Sigmoid colon (tissue), 7 donors: ENCODE measurements at regions of chr17 and their contacts with region 1.

Region 1: DNA sequence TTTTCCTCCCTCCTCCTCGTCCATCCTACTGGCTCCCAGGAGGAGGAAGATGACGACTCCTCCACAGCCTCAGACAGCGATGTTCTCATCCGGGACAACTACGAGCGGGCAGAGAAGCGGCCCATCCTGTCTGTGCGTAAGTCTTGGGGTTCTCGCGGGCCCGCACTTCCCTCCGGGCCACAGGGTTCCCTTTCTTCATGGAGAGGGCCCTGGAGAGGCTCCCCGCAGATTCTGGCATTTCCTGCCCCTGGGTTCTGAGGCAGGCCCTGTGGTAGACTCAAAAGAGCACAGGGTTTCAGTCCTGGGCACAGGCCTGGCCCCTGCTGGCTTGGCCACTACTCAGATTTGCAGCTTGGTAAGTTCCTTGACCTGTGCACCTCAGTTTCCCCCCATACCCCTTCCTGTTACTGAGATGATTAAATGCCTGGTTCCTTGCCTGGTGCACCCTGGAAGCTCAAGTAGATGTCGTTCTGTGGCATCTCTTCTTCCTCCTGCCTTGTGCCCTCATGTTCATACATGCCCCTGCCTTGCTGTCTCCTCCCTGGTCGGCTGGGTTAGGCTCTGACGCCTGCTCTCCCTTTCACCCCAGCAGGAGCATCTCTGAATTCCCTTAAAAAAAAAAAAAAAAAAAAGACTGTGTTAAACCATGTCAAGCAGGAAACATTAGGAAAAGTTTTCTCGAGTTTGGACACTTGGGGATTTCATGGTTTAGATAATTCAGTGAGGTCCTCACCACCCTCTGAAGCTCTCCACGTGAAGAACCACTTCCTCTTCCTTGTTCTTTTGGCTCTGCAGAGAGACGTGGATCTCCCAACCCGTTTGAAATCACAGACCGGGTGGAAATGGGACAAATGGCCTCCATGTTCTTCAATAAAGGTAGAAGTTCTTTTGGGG is 14.3 kb upstream of the NAT9 start:
- DNase-seq: no peak
- H3K4me3 ChIP-seq: no peak overlapping the region
- H3K27ac ChIP-seq: no peak overlapping the region
- H3K4me1 ChIP-seq: peaks cover 0 to 6% (median 0%) of the 10 kb centered on the region in 4 donors
- H3K27me3 ChIP-seq: no peaks in the 10 kb centered on the region
- CTCF ChIP-seq: no peak
- EP300 ChIP-seq: no peak
- POLR2A ChIP-seq: no peak

Region 2: DNA sequence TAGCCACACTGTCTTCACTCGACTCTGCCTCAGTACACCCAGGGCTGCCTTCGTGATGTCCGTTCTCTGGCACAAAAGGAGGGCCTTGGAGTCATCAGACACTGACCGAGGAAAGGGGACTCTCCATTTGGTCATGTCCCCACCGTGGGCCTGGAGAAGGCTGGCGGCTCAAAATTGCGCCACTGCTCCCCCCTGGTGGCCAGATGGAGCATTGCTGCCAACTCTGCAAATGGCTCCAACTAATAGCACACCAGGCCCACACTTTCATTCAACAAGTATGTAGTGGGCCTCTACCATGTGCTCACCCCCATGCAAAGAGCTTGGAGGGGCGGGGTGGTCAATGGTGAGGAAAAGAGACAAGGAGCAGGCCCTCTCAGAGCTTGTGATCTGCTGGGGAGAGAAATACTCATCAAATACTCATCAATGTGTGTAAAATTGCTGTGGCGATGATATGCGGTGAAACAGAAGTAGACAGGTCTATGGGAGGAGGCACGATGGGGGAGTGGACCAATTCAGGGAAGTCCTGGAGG is 74.5 kb after region 1 on chr17:
- intact Hi-C with region 1: loop called (anchors 1 kb)
- DNase-seq: peak; percentile 87
- H3K4me3 ChIP-seq: no peak overlapping the region
- H3K27ac ChIP-seq: no peak overlapping the region
- H3K4me1 ChIP-seq: peaks cover 0 to 24% (median 22%) of the 10 kb centered on the region in 4 donors
- H3K27me3 ChIP-seq: peaks cover 18 to 31% (median 20%) of the 10 kb centered on the region in 3 donors
- CTCF ChIP-seq: peak; percentile 89 to 96 (median 94)
- EP300 ChIP-seq: no peak
- POLR2A ChIP-seq: no peak